Activated T-helper 1 cell treated with anti-CD3 and anti-CD28 coated beads, Interleukin-12 subunit alpha, Interleukin-12 subunit beta, Interleukin-2, Interleukin-4 antibody, amounts not matched to agents 30 ng/mL and 10 ng/mL and 1 ng/mL, durations not matched to agents 14 hours and 24 hours and 36 hours (primary cell): ENCODE measurements at regions of chr5 and their contacts with region 1.

Region 1: DNA sequence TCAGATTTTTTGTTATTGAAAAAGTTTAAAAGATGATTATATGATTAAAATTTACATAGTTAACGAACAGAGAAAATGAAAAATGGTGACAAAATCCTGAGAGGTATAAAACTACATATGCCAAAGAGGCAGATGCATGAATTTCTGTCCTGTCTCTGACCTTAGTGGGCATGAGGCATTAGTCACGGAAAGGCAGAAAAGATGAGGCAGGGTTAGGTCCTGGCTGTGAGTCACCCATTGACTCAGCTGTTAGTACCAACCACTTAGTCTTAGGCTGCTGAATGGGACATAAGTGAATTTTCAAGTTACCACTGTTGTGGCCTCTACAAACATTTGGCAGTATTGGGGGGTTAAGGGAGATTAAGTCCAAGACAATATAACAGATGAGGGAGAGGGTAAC is 33.1 kb downstream of the RASA1 start:
- DNase-seq: no peak
- H3K4me3 Mint-ChIP-seq: no peak overlapping the region
- H3K27ac Mint-ChIP-seq: peak overlapping the region; percentile 70
- H3K4me1 Mint-ChIP-seq: peaks cover 53% of the 10 kb centered on the region
- H3K27me3 Mint-ChIP-seq: no peaks in the 10 kb centered on the region

Region 2: DNA sequence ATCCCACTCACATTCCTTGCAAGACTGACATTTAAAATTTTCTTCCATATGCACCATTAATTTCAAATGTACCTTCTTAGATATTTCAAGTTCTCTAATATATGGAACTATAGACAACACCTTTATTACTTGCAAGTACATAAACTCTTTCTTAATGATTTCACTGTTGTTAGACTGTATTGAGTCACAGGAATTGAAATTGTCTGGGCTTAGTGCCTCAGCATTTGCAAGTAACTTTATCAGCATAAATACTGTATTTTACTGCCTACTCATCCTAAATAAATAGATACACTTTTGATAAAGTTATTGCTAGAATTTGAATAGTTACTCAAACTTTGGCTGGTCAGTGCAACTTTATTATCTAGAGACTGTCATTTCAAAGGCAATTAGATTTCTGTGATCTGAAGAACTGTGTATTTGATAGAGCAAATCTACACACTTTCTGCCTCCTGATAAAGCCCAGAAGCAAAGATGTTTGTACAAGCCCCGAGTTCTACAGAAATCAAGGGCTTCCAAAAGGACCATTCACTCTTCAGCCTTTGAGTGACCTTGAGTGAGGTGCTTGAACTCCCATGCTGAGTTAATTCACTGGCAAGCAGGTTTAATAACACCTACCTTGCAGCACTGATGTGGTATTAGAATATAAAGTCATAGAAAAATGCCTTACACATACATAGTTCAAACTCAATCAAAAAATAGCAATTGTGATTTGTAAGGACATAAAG is 591.4 kb before region 1 on chr5:
- intact Hi-C with region 1: no loop called
- DNase-seq: no peak
- H3K4me3 Mint-ChIP-seq: no peak overlapping the region
- H3K27ac Mint-ChIP-seq: no peak overlapping the region
- H3K4me1 Mint-ChIP-seq: no peaks in the 10 kb centered on the region
- H3K27me3 Mint-ChIP-seq: peaks cover 5% of the 10 kb centered on the region

Region 3: DNA sequence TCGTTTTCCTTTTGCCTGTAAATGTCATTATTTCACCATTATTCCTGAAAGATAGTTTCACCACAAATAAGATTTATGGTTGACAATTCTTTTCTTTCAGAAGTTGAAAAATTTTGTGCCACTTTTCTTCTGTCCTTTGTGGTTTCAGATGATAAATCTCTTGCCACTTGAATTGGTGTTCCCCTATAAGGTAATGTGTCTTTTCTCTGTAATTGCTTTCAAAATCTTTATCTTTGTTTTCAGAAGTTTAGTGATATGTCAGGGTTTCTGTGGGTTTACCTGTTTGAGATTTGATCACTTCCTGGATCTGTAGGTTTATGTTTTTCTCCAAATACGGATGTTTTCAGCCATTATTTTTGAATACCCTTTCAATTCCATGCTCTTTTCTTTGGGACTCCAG is 18.5 kb before region 1 on chr5:
- intact Hi-C with region 1: loop called (anchors 1 kb)
- DNase-seq: no peak
- H3K4me3 Mint-ChIP-seq: peak overlapping the region; percentile 25
- H3K27ac Mint-ChIP-seq: peak overlapping the region; percentile 21
- H3K4me1 Mint-ChIP-seq: peaks cover 50% of the 10 kb centered on the region
- H3K27me3 Mint-ChIP-seq: no peaks in the 10 kb centered on the region

Region 4: GRCh38 chr5:87340716-87341115 is 40.0 kb after region 1 on chr5:
- intact Hi-C with region 1: loop called (anchors 1 kb)
- DNase-seq: no peak
- H3K4me3 Mint-ChIP-seq: peak overlapping the region; percentile 70
- H3K27ac Mint-ChIP-seq: peak overlapping the region; percentile 86
- H3K4me1 Mint-ChIP-seq: peaks cover 32% of the 10 kb centered on the region
- H3K27me3 Mint-ChIP-seq: no peaks in the 10 kb centered on the region